CD14-positive monocyte (primary cell): ENCODE measurements at regions of chr5 and their contacts with region 1.

Region 1: DNA sequence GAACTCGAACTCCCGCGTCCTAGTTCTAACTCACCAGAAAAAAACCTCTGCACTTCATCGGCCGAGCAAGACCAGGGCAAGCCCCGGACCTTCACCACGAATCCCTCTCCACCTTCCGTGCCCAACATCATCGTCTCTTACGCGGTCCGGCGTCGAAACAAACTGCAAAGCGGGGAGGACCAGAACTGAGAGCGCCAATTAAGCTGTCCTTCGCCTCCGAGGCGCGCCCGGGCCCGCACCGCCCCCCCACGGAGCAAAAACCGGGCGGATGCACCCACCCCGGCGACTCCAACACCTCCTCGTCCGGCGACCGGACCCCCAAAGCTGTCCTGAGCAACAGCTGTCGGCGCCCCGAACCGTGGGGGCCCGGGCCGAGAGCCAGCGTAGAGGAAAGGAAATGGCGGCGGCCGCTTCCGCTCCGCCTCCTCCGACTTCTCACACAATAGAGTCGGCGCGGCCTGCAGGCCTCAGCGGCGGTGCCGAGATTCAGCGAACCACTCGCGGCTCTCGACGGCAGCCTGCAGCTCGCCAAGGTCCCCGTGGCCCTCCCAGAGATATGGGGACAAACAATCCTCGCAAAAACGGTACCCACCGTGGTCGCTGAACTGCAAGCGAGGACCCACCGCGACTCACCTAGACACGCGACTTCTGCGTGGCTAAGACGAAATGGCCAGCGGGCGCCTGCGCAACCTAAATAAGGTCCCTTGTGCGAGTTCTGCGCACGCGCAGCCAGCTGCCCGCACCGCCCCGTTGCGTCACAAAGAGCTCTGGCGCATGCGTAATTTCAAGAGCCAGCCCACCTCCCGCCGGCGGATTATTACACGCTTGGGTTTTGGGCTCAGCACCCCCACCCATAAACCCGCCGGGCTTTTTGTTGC is at the start of gene HNRNPH1:
- DNase-seq: peak; percentile 98 to 99 (median 98)
- H3K4me3 ChIP-seq: peak within 1 kb of the TSS; percentile 95 to 99 (median 99)
- H3K4me3 Mint-ChIP-seq: peak within 1 kb of the TSS; percentile 94 to 98
- H3K27ac ChIP-seq: peak within 1 kb of the TSS; percentile 92 to 98
- H3K27ac Mint-ChIP-seq: peak within 1 kb of the TSS; percentile 96 to 99 (median 98)
- H3K4me1 ChIP-seq: peaks cover 37 to 53% of the 10 kb centered on the region in 2 donors
- H3K4me1 Mint-ChIP-seq: peaks cover 41% of the 10 kb centered on the region
- H3K27me3 ChIP-seq: no peaks in the 10 kb centered on the region
- H3K27me3 Mint-ChIP-seq: no peaks in the 10 kb centered on the region
- CTCF ChIP-seq: no peak
- polyA plus RNA-seq, gene HNRNPH1: 47.4 to 522 (median 51.9) TPM

Region 2: DNA sequence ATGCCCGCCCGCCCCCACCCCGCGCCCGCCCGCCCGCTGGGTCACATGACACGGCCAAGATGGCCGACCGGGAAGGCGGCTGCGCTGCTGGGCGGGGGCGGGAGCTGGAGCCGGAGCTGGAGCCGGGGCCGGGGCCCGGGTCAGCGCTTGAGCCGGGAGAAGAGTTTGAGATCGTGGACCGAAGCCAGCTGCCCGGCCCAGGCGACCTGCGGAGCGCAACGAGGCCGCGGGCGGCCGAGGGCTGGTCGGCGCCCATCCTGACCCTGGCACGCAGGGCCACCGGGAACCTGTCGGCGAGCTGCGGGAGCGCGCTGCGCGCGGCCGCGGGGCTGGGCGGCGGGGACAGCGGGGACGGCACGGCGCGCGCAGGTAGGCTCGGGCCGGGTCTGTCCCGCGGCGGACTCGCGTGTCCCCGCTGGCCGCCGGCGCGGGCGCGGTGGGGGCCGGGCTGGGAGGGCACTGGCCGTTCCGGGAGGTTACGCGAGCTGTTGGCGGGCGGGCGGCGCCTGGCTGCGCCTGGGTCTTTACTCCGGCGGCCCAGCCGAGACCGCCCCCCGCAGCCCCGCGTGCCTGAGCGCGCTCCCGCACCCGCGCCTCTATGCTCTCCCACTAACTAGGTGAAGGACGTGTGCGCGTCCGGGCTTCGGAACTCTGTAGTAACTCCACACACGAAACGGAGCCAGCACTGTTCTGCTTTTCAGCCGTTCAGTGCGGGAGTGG is 72.6 kb before region 1 on chr5 and contains the start of gene RUFY1:
- intact Hi-C with region 1: loop called (anchors 2 to 10 kb)
- DNase-seq: peak; percentile 68 to 76 (median 71)
- H3K4me3 ChIP-seq: peak within 1 kb of the TSS; percentile 74 to 89 (median 78)
- H3K4me3 Mint-ChIP-seq: peak within 1 kb of the TSS; percentile 95
- H3K27ac ChIP-seq: peak within 1 kb of the TSS; percentile 92 to 95
- H3K27ac Mint-ChIP-seq: peak within 1 kb of the TSS; percentile 97 to 100 (median 99)
- H3K4me1 ChIP-seq: peaks cover 21 to 40% of the 10 kb centered on the region in 2 donors
- H3K4me1 Mint-ChIP-seq: peaks cover 31% of the 10 kb centered on the region
- H3K27me3 ChIP-seq: no peaks in the 10 kb centered on the region
- H3K27me3 Mint-ChIP-seq: no peaks in the 10 kb centered on the region
- CTCF ChIP-seq: no peak
- polyA plus RNA-seq, gene RUFY1: 26.9 to 29.3 (median 28.8) TPM

Region 3: GRCh38 chr5:179559284-179560252 is 63.7 kb before region 1 on chr5:
- intact Hi-C with region 1: loop called in 1 of 2 experiments (anchors 10 kb)
- DNase-seq: peak; percentile 92 to 98 (median 94)
- H3K4me3 ChIP-seq: peak overlapping the region; percentile 55 to 80 (median 59)
- H3K4me3 Mint-ChIP-seq: peak overlapping the region; percentile 87 to 94
- H3K27ac ChIP-seq: peak overlapping the region; percentile 52 to 77
- H3K27ac Mint-ChIP-seq: peak overlapping the region; percentile 84 to 94 (median 92)
- H3K4me1 ChIP-seq: peaks cover 8 to 12% of the 10 kb centered on the region in 2 donors
- H3K4me1 Mint-ChIP-seq: peaks cover 13% of the 10 kb centered on the region
- H3K27me3 ChIP-seq: no peaks in the 10 kb centered on the region
- H3K27me3 Mint-ChIP-seq: no peaks in the 10 kb centered on the region
- CTCF ChIP-seq: no peak

Region 4: GRCh38 chr5:179697993-179698934 is 75.0 kb after region 1 on chr5:
- intact Hi-C with region 1: loop called in 1 of 2 experiments (anchors 10 kb)
- DNase-seq: peak; percentile 98 to 100 (median 99)
- H3K4me3 ChIP-seq: peak overlapping the region; percentile 55 to 91 (median 81)
- H3K4me3 Mint-ChIP-seq: peak overlapping the region; percentile 94 to 97
- H3K27ac ChIP-seq: peak overlapping the region; percentile 99
- H3K27ac Mint-ChIP-seq: peak overlapping the region; percentile 96 to 100 (median 100)
- H3K4me1 ChIP-seq: peaks cover 50 to 73% of the 10 kb centered on the region in 2 donors
- H3K4me1 Mint-ChIP-seq: peaks cover 54% of the 10 kb centered on the region
- H3K27me3 ChIP-seq: no peaks in the 10 kb centered on the region
- H3K27me3 Mint-ChIP-seq: peaks cover 0 to 2% (median 0%) of the 10 kb centered on the region in 3 donors
- CTCF ChIP-seq: no peak

Region 5: DNA sequence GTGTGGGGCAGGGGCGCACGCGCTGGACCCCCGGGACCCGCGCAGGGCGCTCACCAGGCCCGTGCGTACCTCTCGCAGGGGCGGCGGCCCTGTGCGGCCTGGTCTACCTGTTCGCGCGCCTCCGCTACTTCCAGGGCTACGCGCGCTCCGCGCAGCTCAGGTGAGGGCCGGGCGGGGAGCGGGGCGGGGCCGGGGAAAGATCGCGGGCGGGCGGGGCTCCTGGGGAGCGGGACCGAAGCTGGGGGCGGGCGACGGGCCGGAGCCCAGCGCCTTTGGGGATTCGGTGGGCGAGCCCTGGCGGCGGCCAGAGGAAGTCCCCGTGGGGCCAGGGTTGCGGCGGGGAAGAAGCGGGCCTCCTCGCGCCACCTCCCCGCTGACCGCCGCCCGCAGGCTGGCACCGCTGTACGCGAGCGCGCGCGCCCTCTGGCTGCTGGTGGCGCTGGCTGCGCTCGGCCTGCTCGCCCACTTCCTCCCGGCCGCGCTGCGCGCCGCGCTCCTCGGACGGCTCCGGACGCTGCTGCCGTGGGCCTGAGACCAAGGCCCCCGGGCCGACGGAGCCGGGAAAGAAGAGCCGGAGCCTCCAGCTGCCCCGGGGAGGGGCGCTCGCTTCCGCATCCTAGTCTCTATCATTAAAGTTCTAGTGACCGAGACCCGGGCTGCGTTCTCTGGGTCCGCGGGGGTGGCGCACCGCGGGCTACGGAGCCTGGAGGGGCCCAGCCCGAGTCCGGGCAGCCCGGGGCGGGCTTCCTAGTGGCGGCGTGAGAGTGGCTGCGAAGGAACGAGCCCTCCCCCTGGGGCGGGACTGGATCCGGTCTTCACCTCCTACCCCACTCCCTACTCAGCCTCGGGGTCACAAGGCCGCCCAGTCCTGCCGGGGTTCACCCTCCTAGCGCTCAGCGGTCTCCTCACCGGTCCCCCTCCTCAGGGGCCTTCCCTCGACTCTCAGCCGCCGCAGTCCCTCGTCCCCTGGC is 172.9 kb after region 1 on chr5:
- intact Hi-C with region 1: loop called in 1 of 2 experiments (anchors 5 kb)
- DNase-seq: peak; percentile 84 to 89 (median 85)
- H3K4me3 ChIP-seq: peak overlapping the region; percentile 17 to 74 (median 32)
- H3K4me3 Mint-ChIP-seq: peak overlapping the region; percentile 64 to 75
- H3K27ac ChIP-seq: peak overlapping the region in 1 of 2 donors; percentile 4
- H3K27ac Mint-ChIP-seq: no peak overlapping the region
- H3K4me1 ChIP-seq: peaks cover 52 to 55% of the 10 kb centered on the region in 2 donors
- H3K4me1 Mint-ChIP-seq: peaks cover 42% of the 10 kb centered on the region
- H3K27me3 ChIP-seq: no peaks in the 10 kb centered on the region
- H3K27me3 Mint-ChIP-seq: peaks cover 0 to 2% (median 0%) of the 10 kb centered on the region in 3 donors
- CTCF ChIP-seq: peak; percentile 88

Region 6: DNA sequence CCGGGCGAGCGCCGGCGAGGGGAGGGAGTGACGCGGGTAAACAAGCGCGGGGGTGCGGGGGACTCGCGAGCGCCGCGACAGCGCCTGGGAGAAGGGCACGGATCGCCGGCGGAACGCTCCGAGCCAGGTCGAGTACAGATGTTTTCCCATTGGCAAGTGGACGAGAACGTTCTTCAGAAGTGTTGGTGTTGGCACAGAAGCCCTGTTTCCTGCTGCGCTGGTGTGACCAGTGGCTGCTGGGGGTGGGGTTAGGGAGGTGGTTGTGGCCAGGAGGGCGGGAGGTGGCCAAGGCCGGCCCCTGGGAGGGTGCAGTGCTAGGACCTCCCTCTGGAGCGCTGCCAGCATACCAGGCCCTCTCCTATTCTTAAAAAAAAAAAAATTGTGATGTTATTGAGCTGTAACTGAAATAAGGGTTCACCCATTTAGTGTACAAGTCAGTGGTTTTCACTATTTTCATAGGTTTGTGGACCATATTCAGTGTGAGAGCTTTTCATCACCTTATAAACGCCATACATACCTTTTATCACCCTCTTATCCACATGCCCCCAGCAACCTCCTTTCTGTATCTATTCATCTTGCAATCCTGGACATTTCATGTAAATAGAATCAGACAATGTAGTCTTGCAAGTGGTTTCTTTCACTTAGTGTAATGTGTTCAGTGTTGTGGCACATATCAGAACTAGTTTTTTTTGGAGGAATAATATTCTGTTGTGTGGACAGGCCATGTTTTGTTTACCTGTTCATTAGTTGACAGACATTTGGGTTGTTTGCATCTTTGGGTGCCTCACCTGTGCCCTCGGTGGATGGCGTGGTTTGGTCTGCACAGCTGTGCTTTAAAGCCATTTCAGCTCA is 198.6 kb after region 1 on chr5:
- intact Hi-C with region 1: loop called in 1 of 2 experiments (anchors 10 kb)
- DNase-seq: peak; percentile 79 to 90 (median 86)
- H3K4me3 ChIP-seq: peak overlapping the region; percentile 87 to 99 (median 87)
- H3K4me3 Mint-ChIP-seq: peak overlapping the region; percentile 93 to 94
- H3K27ac ChIP-seq: peak overlapping the region; percentile 90 to 98
- H3K27ac Mint-ChIP-seq: peak overlapping the region; percentile 96 to 99 (median 98)
- H3K4me1 ChIP-seq: peaks cover 49 to 68% of the 10 kb centered on the region in 2 donors
- H3K4me1 Mint-ChIP-seq: peaks cover 65% of the 10 kb centered on the region
- H3K27me3 ChIP-seq: no peaks in the 10 kb centered on the region
- H3K27me3 Mint-ChIP-seq: peaks cover 6 to 10% (median 7%) of the 10 kb centered on the region in 3 donors
- CTCF ChIP-seq: no peak